Vagina (tissue), 2 donors: ENCODE measurements at regions of chrX and their contacts with region 1.

Region 1: DNA sequence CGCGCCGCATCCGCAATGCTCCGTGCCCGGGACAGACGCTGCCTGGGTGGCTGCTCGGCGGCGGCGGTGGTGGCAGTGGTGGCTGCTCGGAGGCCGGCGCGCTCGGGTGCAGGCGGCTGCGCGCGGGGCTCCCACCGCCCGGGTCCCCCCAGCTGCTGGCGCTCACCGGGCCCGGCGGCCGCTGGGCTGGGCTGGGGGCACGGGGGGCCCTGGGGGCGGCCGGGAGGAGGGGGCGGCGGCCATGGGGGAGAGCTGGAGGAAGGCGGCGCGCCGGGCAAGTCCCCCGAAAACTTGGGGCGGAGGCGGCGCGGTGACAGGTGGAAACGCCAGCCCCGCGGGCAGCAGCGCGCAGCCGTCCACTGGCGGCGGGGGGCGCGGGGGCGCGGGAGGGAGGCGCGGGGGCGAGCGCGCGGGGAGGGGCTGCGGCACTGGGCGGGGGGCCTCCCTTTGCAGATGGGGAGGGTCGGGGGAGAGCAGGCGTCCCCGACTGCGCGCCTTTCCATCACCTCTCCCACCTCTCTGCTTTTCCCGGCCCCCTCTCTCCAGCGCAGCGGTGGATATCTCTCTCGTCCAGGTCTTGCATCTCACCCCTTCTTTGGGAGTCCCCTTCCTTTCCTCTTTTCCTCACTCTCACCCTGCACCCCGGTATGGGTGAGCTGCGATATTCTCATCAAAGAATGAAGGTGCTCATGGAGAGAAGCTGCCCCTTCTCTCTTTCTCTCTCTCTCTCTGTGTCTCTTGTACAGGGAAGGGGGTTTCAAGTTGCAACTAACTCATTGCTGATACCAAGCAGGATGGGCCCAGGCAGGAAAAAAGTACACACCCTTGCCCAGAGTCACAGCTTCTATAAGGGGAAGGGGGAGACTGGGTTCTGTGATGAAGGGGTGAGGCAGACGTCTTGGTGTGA is 83.7 kb upstream of the DHRSX start:
- DNase-seq: no peak
- H3K4me3 ChIP-seq: peak overlapping the region in 1 of 2 donors; percentile 12
- H3K27ac ChIP-seq: no peak overlapping the region
- H3K4me1 ChIP-seq: peaks cover 8% of the 10 kb centered on the region
- H3K27me3 ChIP-seq: peaks cover 12% of the 10 kb centered on the region
- CTCF ChIP-seq: no peak
- POLR2A ChIP-seq: no peak

Region 2: GRCh38 chrX:1649621-1650020 is 934.9 kb before region 1 on chrX:
- intact Hi-C with region 1: loop called (anchors 5 kb)
- DNase-seq: no peak
- H3K4me3 ChIP-seq: no peak overlapping the region
- H3K27ac ChIP-seq: no peak overlapping the region
- H3K4me1 ChIP-seq: no peaks in the 10 kb centered on the region
- H3K27me3 ChIP-seq: no peaks in the 10 kb centered on the region
- CTCF ChIP-seq: no peak
- POLR2A ChIP-seq: no peak